HepG2 (cell line): ENCODE measurements at regions of chr2 and their contacts with region 1.

Region 1: DNA sequence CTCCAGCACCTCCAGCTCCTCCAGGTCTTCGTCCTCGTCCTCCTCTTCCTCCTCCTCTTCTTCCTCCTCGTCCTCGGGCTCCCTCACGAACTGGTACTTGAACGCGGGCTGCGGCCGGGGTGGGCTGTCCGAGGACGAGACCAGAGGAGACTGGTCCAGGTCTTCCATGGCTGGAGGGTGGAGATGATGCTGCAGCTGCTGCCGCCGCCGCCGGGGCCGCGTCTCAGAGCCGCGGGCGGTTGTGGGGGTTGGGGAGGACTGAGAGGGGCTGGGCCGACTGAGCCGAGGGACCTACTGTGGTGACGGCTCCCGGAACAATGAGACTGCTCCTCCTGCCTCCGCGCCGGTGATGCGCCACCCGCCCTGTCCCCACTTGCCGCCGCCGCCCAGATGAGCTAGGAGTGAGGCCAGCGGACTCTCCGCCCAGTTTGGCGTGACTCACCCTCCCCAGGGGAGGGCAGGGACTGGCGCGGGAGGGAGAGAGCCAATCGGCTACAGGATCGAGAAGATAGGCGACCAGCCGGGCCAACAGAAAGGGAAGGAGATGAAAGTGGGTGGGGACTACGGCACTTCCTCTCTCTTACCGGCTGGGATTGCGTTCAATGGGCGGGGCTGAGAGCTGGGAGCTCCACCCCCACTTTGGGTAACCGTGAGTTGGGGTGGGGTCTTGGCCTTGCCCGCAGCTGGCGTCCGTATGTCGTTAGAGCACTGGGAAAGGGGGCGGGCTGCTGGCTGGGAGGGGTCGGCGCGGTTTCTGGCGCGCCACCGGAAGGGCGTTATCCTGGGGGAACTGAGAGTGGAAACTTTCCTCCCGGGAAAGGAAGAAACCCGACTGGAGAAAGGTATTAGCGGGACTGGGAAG is at the start of gene RTN4:
- DNase-seq: peak; percentile 99
- ATAC-seq: peak; percentile 90
- H3K4me3 ChIP-seq: peak within 1 kb of the TSS; percentile 87 to 97 (median 94)
- H3K27ac ChIP-seq: peak within 1 kb of the TSS; percentile 84
- H3K4me1 ChIP-seq: peaks cover 41% of the 10 kb centered on the region
- H3K27me3 ChIP-seq: no peaks in the 10 kb centered on the region; a peak in 1 of 5 replicates
- CTCF ChIP-seq: peak; percentile 37; the same call in 1 of the 2 replicates
- EP300 ChIP-seq: no peak
- POLR2A ChIP-seq: peak; percentile 90 to 99
- RAD21 ChIP-seq: peak; percentile 53; the same call in 1 of the 2 replicates
- total RNA-seq, gene RTN4: 67.4 and 98.4 TPM in 2 replicates

Region 2: GRCh38 chr2:55014962-55015939 is 35.1 kb before region 1 on chr2:
- CTCF ChIA-PET with region 1: interaction called, 11 read pairs
- POLR2A ChIA-PET with region 1: interaction called, 18 read pairs
- in situ Hi-C with region 1: no loop called
- intact Hi-C with region 1: loop called (anchors 1 kb)
- DNase-seq: peak; percentile 91
- ATAC-seq: peak; percentile 98
- H3K4me3 ChIP-seq: peak overlapping the region in 2 of 3 experiments; percentile 10 to 13; a peak in 2 of 6 replicates
- H3K27ac ChIP-seq: peak overlapping the region; percentile 13
- H3K4me1 ChIP-seq: peaks cover 67% of the 10 kb centered on the region
- H3K27me3 ChIP-seq: no peaks in the 10 kb centered on the region
- CTCF ChIP-seq: peak; percentile 92
- EP300 ChIP-seq: no peak
- POLR2A ChIP-seq: no peak
- RAD21 ChIP-seq: peak; percentile 86

Region 3: GRCh38 chr2:55038428-55038827 is 11.9 kb before region 1 on chr2:
- CTCF ChIA-PET with region 1: no interaction called
- POLR2A ChIA-PET with region 1: interaction called, 11 read pairs
- in situ Hi-C with region 1: no loop called
- intact Hi-C with region 1: no loop called
- DNase-seq: no peak
- ATAC-seq: no peak
- H3K4me3 ChIP-seq: no peak overlapping the region
- H3K27ac ChIP-seq: no peak overlapping the region
- H3K4me1 ChIP-seq: peaks cover 38% of the 10 kb centered on the region
- H3K27me3 ChIP-seq: no peaks in the 10 kb centered on the region
- CTCF ChIP-seq: no peak
- EP300 ChIP-seq: no peak
- POLR2A ChIP-seq: no peak
- RAD21 ChIP-seq: no peak

Region 4: GRCh38 chr2:55093381-55093780 is 43.0 kb after region 1 on chr2:
- CTCF ChIA-PET with region 1: no interaction called
- POLR2A ChIA-PET with region 1: no interaction called
- in situ Hi-C with region 1: no loop called
- intact Hi-C with region 1: no loop called
- DNase-seq: no peak
- ATAC-seq: no peak
- H3K4me3 ChIP-seq: no peak overlapping the region
- H3K27ac ChIP-seq: no peak overlapping the region
- H3K4me1 ChIP-seq: peaks cover 9% of the 10 kb centered on the region
- H3K27me3 ChIP-seq: peaks cover 0 to 16% of the 10 kb centered on the region in 2 experiments; a peak in 3 of 5 replicates
- CTCF ChIP-seq: no peak
- EP300 ChIP-seq: no peak
- POLR2A ChIP-seq: no peak
- RAD21 ChIP-seq: no peak

Region 5: GRCh38 chr2:55232084-55232862 is 181.9 kb after region 1 on chr2 and contains the starts of genes CLHC1 and RPS27A:
- CTCF ChIA-PET with region 1: no interaction called
- POLR2A ChIA-PET with region 1: interaction called, 13 read pairs
- in situ Hi-C with region 1: no loop called
- intact Hi-C with region 1: loop called (anchors 10 kb)
- DNase-seq: peak; percentile 99
- ATAC-seq: peak; percentile 96
- H3K4me3 ChIP-seq: peak within 1 kb of the TSS; percentile 82 to 95 (median 93)
- H3K27ac ChIP-seq: peak within 1 kb of the TSS; percentile 98
- H3K4me1 ChIP-seq: peaks cover 59% of the 10 kb centered on the region
- H3K27me3 ChIP-seq: no peaks in the 10 kb centered on the region; a peak in 1 of 5 replicates
- CTCF ChIP-seq: no peak
- EP300 ChIP-seq: 0 out of 4 replicates have a peak, but pooled peaks of 1 of the 2 experiments have one; percentile 28
- POLR2A ChIP-seq: peak; percentile 98
- RAD21 ChIP-seq: peak; percentile 50
- total RNA-seq, gene CLHC1: 12.1 and 12.6 TPM in 2 replicates
- total RNA-seq, gene RPS27A: 2,779 and 3,447 TPM in 2 replicates

Region 6: GRCh38 chr2:55419679-55420438 is 369.5 kb after region 1 on chr2 and contains the start of gene CCDC88A:
- CTCF ChIA-PET with region 1: no interaction called
- POLR2A ChIA-PET with region 1: interaction called, 3 read pairs
- in situ Hi-C with region 1: no loop called
- intact Hi-C with region 1: loop called (anchors 5 kb)
- DNase-seq: peak; percentile 92
- ATAC-seq: peak; percentile 93
- H3K4me3 ChIP-seq: peak within 1 kb of the TSS; percentile 88 to 98 (median 89)
- H3K27ac ChIP-seq: peak within 1 kb of the TSS; percentile 86
- H3K4me1 ChIP-seq: peaks cover 69% of the 10 kb centered on the region
- H3K27me3 ChIP-seq: peaks cover 0 to 4% of the 10 kb centered on the region in 2 experiments; a peak in 1 of 5 replicates
- CTCF ChIP-seq: peak; percentile 58
- EP300 ChIP-seq: peak; percentile 72 to 76; a peak in 3 of 4 replicates
- POLR2A ChIP-seq: peak; percentile 92 to 97
- RAD21 ChIP-seq: peak; percentile 82
- total RNA-seq, gene CCDC88A: 84.1 and 112 TPM in 2 replicates